H1 (cell line): ENCODE measurements at regions of chr10 and their contacts with region 1.

Region 1: GRCh38 chr10:95445837-95446486 is 115.2 kb downstream of the SORBS1 start:
- DNase-seq: peak; percentile 53 to 70
- H3K4me3 ChIP-seq: no peak overlapping the region
- H3K27ac ChIP-seq: no peak overlapping the region
- H3K4me1 ChIP-seq: peaks cover 0 to 11% (median 1%) of the 10 kb centered on the region in 4 experiments; a peak in 4 of 7 replicates
- H3K27me3 ChIP-seq: no peaks in the 10 kb centered on the region
- CTCF ChIP-seq: peak; percentile 58 to 97 (median 75)
- EP300 ChIP-seq: no peak
- POLR2A ChIP-seq: no peak
- RAD21 ChIP-seq: peak; percentile 59 to 75

Region 2: DNA sequence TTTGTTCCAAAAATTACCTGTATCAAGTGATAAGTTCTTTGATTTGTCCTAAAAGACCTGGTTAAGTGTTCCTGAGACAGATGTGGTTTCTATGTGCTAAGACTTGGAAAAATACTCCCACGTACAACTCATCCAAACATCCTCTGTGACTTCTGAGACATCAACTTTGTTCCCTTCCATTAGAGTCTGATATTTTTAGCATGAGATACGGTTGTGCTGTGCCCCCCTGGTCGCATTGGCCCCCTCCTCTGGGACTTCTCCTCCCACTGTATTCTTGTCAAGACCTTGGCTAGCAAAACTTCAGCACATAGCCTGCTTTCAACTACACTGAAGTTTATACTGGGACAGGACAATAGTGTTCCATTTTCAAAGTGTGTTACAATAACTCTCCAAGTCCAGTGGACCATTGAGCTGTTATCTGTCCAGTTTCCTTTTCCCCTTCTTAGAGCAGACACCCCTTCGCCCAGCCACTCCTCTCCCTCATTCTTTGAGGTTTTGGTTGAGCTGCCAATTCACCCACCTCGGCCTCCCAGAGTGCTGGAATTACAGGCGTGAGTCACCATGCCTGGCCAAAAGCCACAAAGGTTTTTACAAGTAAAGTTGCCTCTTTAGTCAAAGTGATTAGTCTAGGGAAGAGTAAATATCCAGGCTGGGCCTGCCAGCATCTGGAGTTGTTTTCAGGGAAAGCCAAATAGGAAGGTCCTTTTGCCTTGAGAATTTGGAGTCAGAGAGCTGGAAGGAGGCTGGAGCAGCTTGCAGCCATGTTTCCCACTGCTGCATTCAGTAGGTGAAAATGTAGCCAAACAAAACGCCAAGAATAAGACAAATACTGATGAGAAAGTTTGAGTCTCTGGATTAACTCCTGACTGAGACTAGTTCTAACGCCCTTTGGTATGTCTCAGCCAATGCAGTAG is 137.3 kb before region 1 on chr10:
- CTCF ChIA-PET with region 1: no interaction called
- POLR2A ChIA-PET with region 1: no interaction called
- DNase-seq: no peak
- H3K4me3 ChIP-seq: no peak overlapping the region
- H3K27ac ChIP-seq: no peak overlapping the region
- H3K4me1 ChIP-seq: peaks cover 0 to 25% (median 7%) of the 10 kb centered on the region in 4 experiments; a peak in 6 of 7 replicates
- H3K27me3 ChIP-seq: 0 out of 7 replicates have a peak, but pooled peaks cover 0 to 3% (median 0%) of the 10 kb centered on the region in 4 experiments
- CTCF ChIP-seq: no peak
- EP300 ChIP-seq: no peak
- POLR2A ChIP-seq: no peak
- RAD21 ChIP-seq: no peak

Region 3: GRCh38 chr10:95459446-95460045 is 13.6 kb after region 1 on chr10:
- CTCF ChIA-PET with region 1: interaction called, 95 read pairs
- POLR2A ChIA-PET with region 1: interaction called, 4 read pairs
- DNase-seq: no peak
- H3K4me3 ChIP-seq: no peak overlapping the region
- H3K27ac ChIP-seq: no peak overlapping the region
- H3K4me1 ChIP-seq: peaks cover 0 to 15% (median 13%) of the 10 kb centered on the region in 4 experiments; a peak in 4 of 7 replicates
- H3K27me3 ChIP-seq: no peaks in the 10 kb centered on the region
- CTCF ChIP-seq: no peak
- EP300 ChIP-seq: no peak
- POLR2A ChIP-seq: no peak
- RAD21 ChIP-seq: no peak

Region 4: DNA sequence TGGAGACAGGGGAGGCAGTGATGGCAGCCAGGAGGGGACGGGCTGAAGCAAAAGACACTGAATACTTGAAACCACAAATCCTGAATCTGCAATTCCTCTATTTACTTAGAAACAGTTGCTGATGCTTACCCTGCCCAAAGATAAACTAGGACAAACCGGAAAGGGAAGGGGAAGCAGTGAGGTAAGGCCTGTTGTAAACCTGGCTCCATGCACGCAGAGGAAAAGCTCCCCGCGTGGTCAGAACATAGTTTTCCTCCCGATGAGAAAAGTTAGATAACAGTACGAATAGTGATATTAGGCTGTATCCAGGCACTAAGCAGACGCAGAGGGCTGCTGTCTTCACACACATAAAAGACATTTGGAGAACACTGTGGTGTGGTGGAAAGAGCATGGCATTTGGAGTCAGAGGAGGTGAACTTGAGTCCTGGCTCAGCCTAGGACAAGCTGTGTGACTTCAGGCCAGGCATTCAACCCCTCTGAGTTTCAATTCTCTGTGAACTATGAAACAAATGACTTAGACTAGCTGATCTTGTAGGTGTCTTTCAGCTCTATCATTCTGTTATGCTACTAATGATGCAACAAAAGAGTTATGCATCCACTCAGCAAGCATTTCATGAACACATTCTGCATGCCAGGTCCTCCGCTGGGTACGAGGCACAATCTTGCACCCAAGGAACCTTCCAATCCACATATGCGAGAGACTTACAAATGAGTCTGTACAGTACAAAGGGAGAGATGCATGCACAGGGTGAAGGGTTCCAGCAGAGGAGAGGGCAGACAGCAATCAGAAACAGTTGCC is 34.3 kb after region 1 on chr10:
- CTCF ChIA-PET with region 1: interaction called, 61 read pairs
- POLR2A ChIA-PET with region 1: interaction called, 4 read pairs
- DNase-seq: no peak
- H3K4me3 ChIP-seq: no peak overlapping the region
- H3K27ac ChIP-seq: 0 out of 2 replicates have a peak overlapping the region, but pooled peaks have one; percentile 21
- H3K4me1 ChIP-seq: peaks cover 13 to 31% (median 20%) of the 10 kb centered on the region in 4 experiments
- H3K27me3 ChIP-seq: no peaks in the 10 kb centered on the region
- CTCF ChIP-seq: peak in 1 of 3 experiments; percentile 34; a peak in 1 of 4 replicates
- EP300 ChIP-seq: no peak
- POLR2A ChIP-seq: no peak
- RAD21 ChIP-seq: no peak; a peak in 1 of 4 replicates

Region 5: DNA sequence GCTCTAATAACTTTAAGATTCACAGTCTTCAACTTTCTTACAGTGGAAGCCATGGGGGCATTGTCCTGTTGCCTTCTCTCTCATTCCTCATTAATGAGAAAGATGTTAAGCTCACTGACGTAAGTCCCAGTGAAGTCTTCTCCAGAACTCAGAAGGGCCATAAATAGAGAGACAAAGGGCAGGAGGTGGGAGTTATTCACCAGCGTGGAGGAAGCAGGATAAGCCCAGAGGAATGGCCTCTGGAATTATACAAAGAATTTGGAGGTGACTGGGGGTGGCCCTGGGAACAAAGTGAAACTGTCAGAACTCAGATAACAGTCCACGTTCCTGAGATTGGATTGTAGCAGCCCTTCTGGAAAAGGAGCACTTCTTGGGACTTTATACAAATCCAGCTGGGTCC is 62.8 kb after region 1 on chr10:
- CTCF ChIA-PET with region 1: interaction called, 11 read pairs
- POLR2A ChIA-PET with region 1: no interaction called
- DNase-seq: no peak
- H3K4me3 ChIP-seq: no peak overlapping the region
- H3K27ac ChIP-seq: no peak overlapping the region
- H3K4me1 ChIP-seq: peaks cover 0 to 10% (median 6%) of the 10 kb centered on the region in 4 experiments; a peak in 5 of 7 replicates
- H3K27me3 ChIP-seq: no peaks in the 10 kb centered on the region
- CTCF ChIP-seq: no peak
- EP300 ChIP-seq: no peak
- POLR2A ChIP-seq: no peak
- RAD21 ChIP-seq: no peak

Region 6: GRCh38 chr10:95601116-95601719 is 155.3 kb after region 1 on chr10:
- CTCF ChIA-PET with region 1: interaction called, 91 read pairs
- POLR2A ChIA-PET with region 1: no interaction called
- DNase-seq: peak; percentile 84 to 88
- H3K4me3 ChIP-seq: no peak overlapping the region
- H3K27ac ChIP-seq: no peak overlapping the region
- H3K4me1 ChIP-seq: peaks cover 0 to 3% (median 0%) of the 10 kb centered on the region in 4 experiments; a peak in 1 of 7 replicates
- H3K27me3 ChIP-seq: no peaks in the 10 kb centered on the region
- CTCF ChIP-seq: peak; percentile 78 to 99 (median 98)
- EP300 ChIP-seq: no peak
- POLR2A ChIP-seq: no peak
- RAD21 ChIP-seq: peak; percentile 100